HepG2 (cell line): ENCODE measurements at regions of chr2 and their contacts with region 1.

Region 1: DNA sequence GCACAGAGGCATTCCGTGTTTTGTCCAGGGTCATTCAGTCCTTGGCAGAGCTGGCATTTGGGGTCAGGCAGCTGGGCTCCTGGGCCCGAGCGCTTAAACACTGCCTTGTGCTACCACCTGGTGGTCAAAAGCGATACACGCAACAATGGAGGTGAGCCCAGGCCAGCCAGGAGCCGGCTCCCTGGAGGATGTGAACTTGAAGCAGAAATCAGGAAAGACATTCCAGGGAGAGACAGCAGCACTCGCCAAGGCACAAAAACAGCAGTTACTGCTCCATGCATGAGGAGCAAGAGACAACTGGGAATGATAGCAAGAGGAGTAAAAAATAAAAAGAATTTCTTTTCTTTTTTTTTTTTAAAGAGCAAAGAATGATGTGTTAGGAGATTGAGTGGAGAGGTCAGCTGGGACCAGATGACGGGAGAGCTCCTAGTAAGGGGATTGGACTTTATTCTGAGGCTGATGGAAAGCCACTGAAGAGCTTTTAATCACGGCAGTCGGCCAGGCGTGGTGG is 20.7 kb downstream of the SCYGR8 start:
- DNase-seq: peak; percentile 83
- ATAC-seq: peak; percentile 98
- H3K4me3 ChIP-seq: peak overlapping the region in 1 of 3 experiments; percentile 8; a peak in 1 of 6 replicates
- H3K27ac ChIP-seq: no peak overlapping the region
- H3K4me1 ChIP-seq: peaks cover 56% of the 10 kb centered on the region
- H3K27me3 ChIP-seq: no peaks in the 10 kb centered on the region
- CTCF ChIP-seq: peak; percentile 99
- EP300 ChIP-seq: peak in 1 of 2 experiments; percentile 38; a peak in 1 of 4 replicates
- POLR2A ChIP-seq: no peak
- RAD21 ChIP-seq: peak; percentile 98

Region 2: GRCh38 chr2:227132986-227133385 is 633.4 kb before region 1 on chr2:
- CTCF ChIA-PET with region 1: interaction called, 5 read pairs
- POLR2A ChIA-PET with region 1: no interaction called
- in situ Hi-C with region 1: loop called (anchors 10 kb)
- intact Hi-C with region 1: loop called (anchors 1 kb)
- DNase-seq: no peak
- ATAC-seq: no peak
- H3K4me3 ChIP-seq: no peak overlapping the region
- H3K27ac ChIP-seq: no peak overlapping the region
- H3K4me1 ChIP-seq: no peaks in the 10 kb centered on the region
- H3K27me3 ChIP-seq: peaks cover 2 to 54% of the 10 kb centered on the region in 2 experiments; a peak in 3 of 5 replicates
- CTCF ChIP-seq: no peak
- EP300 ChIP-seq: no peak
- POLR2A ChIP-seq: no peak
- RAD21 ChIP-seq: no peak

Region 3: GRCh38 chr2:227471924-227472264 is 294.5 kb before region 1 on chr2 and contains the start of gene AGFG1:
- CTCF ChIA-PET with region 1: interaction called, 6 read pairs
- POLR2A ChIA-PET with region 1: no interaction called
- in situ Hi-C with region 1: loop called (anchors 5 kb)
- intact Hi-C with region 1: loop called (anchors 2 kb)
- DNase-seq: peak; percentile 76
- ATAC-seq: peak; percentile 81
- H3K4me3 ChIP-seq: peak within 1 kb of the TSS; percentile 94 to 98 (median 97)
- H3K27ac ChIP-seq: peak within 1 kb of the TSS; percentile 81
- H3K4me1 ChIP-seq: peaks cover 56% of the 10 kb centered on the region
- H3K27me3 ChIP-seq: no peaks in the 10 kb centered on the region; a peak in 1 of 5 replicates
- CTCF ChIP-seq: peak; percentile 95
- EP300 ChIP-seq: 0 out of 4 replicates have a peak, but pooled peaks of 1 of the 2 experiments have one; percentile 24
- POLR2A ChIP-seq: peak; percentile 63 to 76; a peak in 3 of 4 replicates
- RAD21 ChIP-seq: peak; percentile 83
- total RNA-seq, gene AGFG1: 145 and 187 TPM in 2 replicates

Region 4: DNA sequence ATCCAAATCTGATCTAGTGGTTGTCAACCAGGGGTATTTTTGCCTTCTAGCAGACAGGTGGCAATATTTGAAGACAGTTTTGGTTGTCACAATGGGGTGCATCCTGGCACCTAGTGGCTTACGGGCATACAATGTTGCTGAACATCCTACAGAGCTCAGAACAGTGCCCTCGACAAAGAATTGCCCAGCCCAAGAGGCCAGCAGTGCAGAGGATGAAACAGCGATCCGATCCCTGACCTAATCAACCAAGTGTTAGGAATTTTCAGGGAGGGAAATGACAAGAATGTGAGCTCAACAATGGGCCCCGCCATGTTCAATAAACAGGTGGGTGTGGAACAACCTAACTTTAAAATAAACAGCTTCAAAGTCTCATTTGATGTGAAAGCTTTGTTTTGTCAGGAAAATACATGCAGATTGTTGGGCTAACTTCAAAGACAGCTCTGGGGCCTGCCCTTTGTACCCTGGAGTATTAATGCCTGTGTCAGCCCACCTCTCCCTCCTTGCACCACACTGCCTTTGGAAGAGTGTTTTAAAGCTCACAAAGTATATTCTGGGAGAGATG is 122.4 kb before region 1 on chr2:
- CTCF ChIA-PET with region 1: no interaction called
- POLR2A ChIA-PET with region 1: interaction called, 3 read pairs
- in situ Hi-C with region 1: no loop called
- intact Hi-C with region 1: loop called (anchors 1 kb)
- DNase-seq: peak; percentile 98
- ATAC-seq: peak; percentile 95
- H3K4me3 ChIP-seq: peak overlapping the region in 1 of 3 experiments; percentile 18; a peak in 1 of 6 replicates
- H3K27ac ChIP-seq: peak overlapping the region; percentile 61
- H3K4me1 ChIP-seq: peaks cover 38% of the 10 kb centered on the region
- H3K27me3 ChIP-seq: no peaks in the 10 kb centered on the region
- CTCF ChIP-seq: peak; percentile 26; the same call in 1 of the 2 replicates
- EP300 ChIP-seq: peak; percentile 60 to 96; a peak in 3 of 4 replicates
- POLR2A ChIP-seq: no peak
- RAD21 ChIP-seq: peak; percentile 30

Region 5: DNA sequence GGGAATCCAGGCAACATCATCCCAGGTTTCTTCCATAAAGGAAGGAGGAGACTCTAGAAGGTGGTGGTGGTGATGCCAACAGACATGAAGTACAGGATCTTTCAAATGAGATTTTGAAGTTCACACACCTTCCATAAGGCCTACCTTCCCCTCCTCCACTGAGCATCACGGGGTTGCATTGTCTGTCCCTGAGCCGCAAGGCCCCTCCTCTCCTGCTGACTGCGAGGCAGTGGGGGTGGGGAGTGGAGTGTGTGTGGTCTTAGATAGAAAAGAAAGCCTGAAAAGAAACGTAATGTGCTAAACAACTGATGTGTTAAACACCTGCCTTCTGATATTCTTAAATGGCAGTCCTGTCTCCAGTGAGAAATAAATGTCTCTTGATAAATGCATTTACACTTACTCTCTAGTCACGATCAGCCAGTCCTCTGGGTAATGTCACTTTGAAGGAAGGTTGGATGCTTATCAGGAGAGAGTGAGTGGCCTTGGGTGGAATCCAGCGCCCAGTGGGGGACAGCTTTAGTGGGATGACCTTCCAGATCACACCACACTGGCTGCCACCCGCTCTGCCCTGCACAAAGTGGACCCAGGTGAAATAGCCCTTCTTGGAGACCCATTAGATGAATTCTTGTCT is 105.3 kb before region 1 on chr2:
- CTCF ChIA-PET with region 1: interaction called, 29 read pairs
- POLR2A ChIA-PET with region 1: interaction called, 3 read pairs
- in situ Hi-C with region 1: loop called (anchors 5 kb)
- intact Hi-C with region 1: loop called (anchors 1 kb)
- DNase-seq: no peak
- ATAC-seq: no peak; the same call in 2 of the 3 replicates
- H3K4me3 ChIP-seq: no peak overlapping the region
- H3K27ac ChIP-seq: no peak overlapping the region
- H3K4me1 ChIP-seq: peaks cover 23% of the 10 kb centered on the region
- H3K27me3 ChIP-seq: no peaks in the 10 kb centered on the region
- CTCF ChIP-seq: no peak
- EP300 ChIP-seq: no peak
- POLR2A ChIP-seq: no peak
- RAD21 ChIP-seq: no peak

Region 6: DNA sequence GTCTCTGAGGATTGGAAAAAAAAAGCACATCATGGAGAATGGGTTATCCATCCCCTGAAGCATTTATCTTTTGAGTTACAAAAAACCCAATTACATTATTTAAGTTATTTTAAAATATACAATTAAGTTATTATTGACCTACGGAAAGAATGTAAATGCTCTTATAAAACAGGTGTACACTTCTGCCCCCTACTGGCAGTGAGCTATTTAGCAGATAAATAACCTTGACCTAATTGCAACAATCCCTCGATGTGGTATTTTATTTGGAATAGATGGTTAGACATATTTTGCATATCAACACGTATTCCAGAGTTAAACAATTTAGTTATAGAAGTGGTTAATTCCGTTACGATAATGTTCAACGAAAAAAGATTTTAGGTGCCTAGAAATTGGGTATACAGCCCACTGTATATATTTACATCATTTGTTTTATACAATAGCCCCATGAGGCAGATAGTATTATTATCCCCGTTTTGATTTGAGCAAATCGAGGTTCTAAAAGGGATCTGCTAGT is 95.9 kb after region 1 on chr2:
- CTCF ChIA-PET with region 1: interaction called, 6 read pairs
- POLR2A ChIA-PET with region 1: no interaction called
- in situ Hi-C with region 1: loop called (anchors 5 kb)
- intact Hi-C with region 1: no loop called
- DNase-seq: peak; percentile 65
- ATAC-seq: no peak
- H3K4me3 ChIP-seq: peak overlapping the region in 1 of 3 experiments; percentile 27; a peak in 2 of 6 replicates
- H3K27ac ChIP-seq: no peak overlapping the region
- H3K4me1 ChIP-seq: peaks cover 33% of the 10 kb centered on the region
- H3K27me3 ChIP-seq: peaks cover 4 to 30% of the 10 kb centered on the region in 2 experiments; a peak in 4 of 5 replicates
- CTCF ChIP-seq: peak; percentile 74
- EP300 ChIP-seq: no peak
- POLR2A ChIP-seq: no peak
- RAD21 ChIP-seq: peak; percentile 31; the same call in 1 of the 2 replicates

Region 7: DNA sequence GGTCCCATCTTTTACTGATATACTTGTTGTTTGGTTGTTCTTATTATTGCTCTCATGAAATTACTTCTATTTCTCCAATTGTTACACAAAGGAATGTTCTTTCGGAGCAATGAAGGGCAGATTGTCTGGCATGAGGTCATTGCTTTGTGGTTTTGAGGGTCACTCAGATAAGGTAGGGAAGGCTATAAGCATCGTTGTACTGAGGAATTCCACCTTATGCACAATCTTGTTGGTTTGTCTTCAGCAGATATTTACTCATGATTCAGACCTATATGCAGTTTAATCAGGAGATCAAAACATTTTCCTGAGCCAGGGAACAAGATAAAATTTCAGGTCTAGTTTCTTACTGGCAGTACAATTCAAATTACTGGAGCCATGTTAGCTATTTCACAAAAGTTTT is 578.1 kb after region 1 on chr2:
- CTCF ChIA-PET with region 1: no interaction called
- POLR2A ChIA-PET with region 1: no interaction called
- in situ Hi-C with region 1: no loop called
- intact Hi-C with region 1: no loop called
- DNase-seq: no peak
- ATAC-seq: no peak
- H3K4me3 ChIP-seq: no peak overlapping the region
- H3K27ac ChIP-seq: no peak overlapping the region
- H3K4me1 ChIP-seq: no peaks in the 10 kb centered on the region
- H3K27me3 ChIP-seq: no peaks in the 10 kb centered on the region
- CTCF ChIP-seq: no peak
- EP300 ChIP-seq: no peak
- POLR2A ChIP-seq: no peak
- RAD21 ChIP-seq: no peak